ENCODE measurements at regions of chr11 and their contacts with region 1.

Region 1: GRCh38 chr11:113305440-113306336 is 8.7 kb upstream of the TTC12 start:
- ATAC-seq: peak; percentile 84 to 99 (median 96)
- H3K4me3 ChIP-seq: no peak overlapping the region
- H3K27ac ChIP-seq: no peak overlapping the region
- H3K4me1 ChIP-seq: no peaks in the 10 kb centered on the region

Region 2: DNA sequence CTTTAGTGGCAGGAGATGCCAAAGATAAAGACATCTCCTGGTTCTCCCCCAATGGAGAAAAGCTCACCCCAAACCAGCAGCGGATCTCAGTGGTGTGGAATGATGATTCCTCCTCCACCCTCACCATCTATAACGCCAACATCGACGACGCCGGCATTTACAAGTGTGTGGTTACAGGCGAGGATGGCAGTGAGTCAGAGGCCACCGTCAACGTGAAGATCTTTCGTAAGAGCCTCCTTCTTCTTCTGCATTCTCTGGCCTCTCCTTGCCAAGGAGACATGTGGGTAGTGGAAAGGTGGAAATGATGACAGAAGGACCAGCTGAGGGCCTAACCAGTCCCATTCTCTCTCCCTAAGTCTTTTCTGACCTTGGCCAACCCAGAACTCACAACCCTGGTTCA is 101.4 kb before region 1 on chr11:
- in situ Hi-C with region 1: no loop called
- ATAC-seq: no peak
- H3K4me3 ChIP-seq: no peak overlapping the region
- H3K27ac ChIP-seq: peak overlapping the region in 1 of 2 donors; percentile 8
- H3K4me1 ChIP-seq: peaks cover 29 to 58% of the 10 kb centered on the region in 2 donors

Region 3: GRCh38 chr11:113532697-113533424 is 227.2 kb after region 1 on chr11:
- in situ Hi-C with region 1: loop called (anchors 5 to 25 kb)
- ATAC-seq: peak; percentile 65 to 97 (median 78)
- H3K4me3 ChIP-seq: no peak overlapping the region
- H3K27ac ChIP-seq: no peak overlapping the region
- H3K4me1 ChIP-seq: no peaks in the 10 kb centered on the region

Region 4: DNA sequence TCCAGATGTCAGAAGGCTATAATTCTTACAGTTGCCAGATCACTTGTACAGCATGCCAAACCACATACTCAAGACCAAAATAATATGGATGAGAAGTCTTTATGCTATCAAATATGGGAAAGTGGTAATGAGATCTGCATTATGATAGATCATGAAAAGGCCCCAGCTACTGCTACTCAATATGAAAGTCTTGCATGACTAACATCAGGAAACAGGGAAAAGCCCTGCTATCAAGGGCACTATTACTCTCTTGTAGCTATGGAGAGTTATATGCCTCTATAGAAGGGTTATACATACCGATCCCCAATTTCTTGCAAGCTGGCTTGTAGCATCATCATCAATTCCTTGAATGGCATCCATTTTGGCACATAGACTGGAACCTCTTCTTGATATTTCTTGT is 430.6 kb after region 1 on chr11:
- in situ Hi-C with region 1: loop called in 5 of 9 experiments (anchors 10 to 25 kb)
- ATAC-seq: no peak
- H3K4me3 ChIP-seq: no peak overlapping the region
- H3K27ac ChIP-seq: no peak overlapping the region
- H3K4me1 ChIP-seq: peaks cover 3 to 14% of the 10 kb centered on the region in 2 donors

Measured in motor neuron (in vitro differentiated cells).